ENCODE measurements at regions of chr14 and their contacts with region 1.

Region 1: DNA sequence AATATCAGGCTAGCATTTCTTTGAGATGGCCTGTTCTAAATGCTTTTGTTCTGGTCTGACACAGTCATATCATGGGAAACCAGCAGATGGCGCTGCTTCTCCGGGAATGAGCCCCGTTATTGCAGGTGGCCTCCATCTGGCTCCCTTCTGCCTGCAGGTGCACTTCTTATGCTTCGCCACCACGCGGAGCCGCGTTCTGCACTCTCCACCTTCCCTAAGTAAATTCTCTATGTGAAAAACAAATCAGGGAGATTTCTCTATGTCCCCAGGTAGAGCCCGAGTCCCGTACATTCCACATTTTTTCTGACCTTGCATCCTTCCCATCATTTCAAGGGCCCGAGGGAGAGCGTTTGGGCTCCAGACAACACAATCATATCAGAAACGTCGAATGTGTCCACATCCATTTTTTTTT is 26.2 kb downstream of the GLRX5 start:
- DNase-seq: peak; percentile 90
- H3K4me3 ChIP-seq: no peak overlapping the region
- H3K27ac ChIP-seq: no peak overlapping the region
- H3K4me1 ChIP-seq: no peaks in the 10 kb centered on the region
- H3K27me3 ChIP-seq: no peaks in the 10 kb centered on the region
- CTCF ChIP-seq: peak; percentile 97

Region 2: GRCh38 chr14:95340201-95340697 is 220.8 kb before region 1 on chr14:
- intact Hi-C with region 1: no loop called
- DNase-seq: peak; percentile 95
- H3K4me3 ChIP-seq: no peak overlapping the region
- H3K27ac ChIP-seq: peak overlapping the region; percentile 75
- H3K4me1 ChIP-seq: no peaks in the 10 kb centered on the region
- H3K27me3 ChIP-seq: no peaks in the 10 kb centered on the region
- CTCF ChIP-seq: no peak

Region 3: GRCh38 chr14:95683793-95684192 is 122.8 kb after region 1 on chr14:
- intact Hi-C with region 1: loop called (anchors 2 kb)
- DNase-seq: peak; percentile 22
- H3K4me3 ChIP-seq: no peak overlapping the region
- H3K27ac ChIP-seq: no peak overlapping the region
- H3K4me1 ChIP-seq: no peaks in the 10 kb centered on the region
- H3K27me3 ChIP-seq: no peaks in the 10 kb centered on the region
- CTCF ChIP-seq: peak; percentile 54

Region 4: DNA sequence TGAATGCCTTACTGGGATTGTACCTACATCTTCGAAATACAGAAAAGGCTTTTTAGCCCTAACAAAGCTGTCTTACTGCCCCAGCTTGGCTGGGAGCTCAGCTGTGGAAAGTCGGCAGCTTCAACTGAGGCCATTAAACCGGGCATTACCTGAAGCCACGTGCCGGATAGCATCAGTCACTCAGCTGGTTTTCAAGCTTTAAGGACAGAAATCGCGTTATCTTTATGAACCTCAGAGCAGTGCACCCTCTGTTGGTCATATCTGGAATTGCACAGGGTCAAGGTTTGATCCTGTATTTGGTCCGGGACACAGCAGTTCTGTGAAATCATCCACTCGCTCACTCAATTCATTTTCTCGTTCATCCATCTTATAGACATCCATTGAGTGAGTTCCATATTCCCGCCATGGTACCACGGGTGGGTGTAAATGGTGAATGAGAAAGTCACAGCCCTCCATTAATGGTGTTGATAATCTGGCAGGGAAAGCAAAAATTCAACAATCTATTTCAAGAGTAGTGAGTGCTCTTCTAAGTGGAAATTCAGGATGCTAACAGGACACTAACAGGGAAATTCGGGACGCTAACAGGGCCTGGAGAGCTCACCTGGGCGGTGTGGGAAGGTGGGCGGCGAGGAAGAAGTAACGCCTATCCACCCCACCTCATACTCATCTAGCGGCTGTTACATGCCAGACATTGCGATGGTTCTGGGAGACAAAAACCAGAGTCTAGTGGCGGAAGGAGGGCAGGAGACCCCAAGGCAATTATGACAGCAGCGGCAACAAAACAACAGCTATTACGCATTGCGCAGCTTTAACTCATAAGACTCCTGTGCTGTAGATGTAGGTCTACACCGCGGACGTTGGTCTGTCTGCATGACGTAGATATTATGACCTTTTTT is 213.5 kb after region 1 on chr14:
- intact Hi-C with region 1: loop called (anchors 5 kb)
- DNase-seq: peak; percentile 47
- H3K4me3 ChIP-seq: no peak overlapping the region
- H3K27ac ChIP-seq: no peak overlapping the region
- H3K4me1 ChIP-seq: no peaks in the 10 kb centered on the region
- H3K27me3 ChIP-seq: no peaks in the 10 kb centered on the region
- CTCF ChIP-seq: peak; percentile 78

Region 5: DNA sequence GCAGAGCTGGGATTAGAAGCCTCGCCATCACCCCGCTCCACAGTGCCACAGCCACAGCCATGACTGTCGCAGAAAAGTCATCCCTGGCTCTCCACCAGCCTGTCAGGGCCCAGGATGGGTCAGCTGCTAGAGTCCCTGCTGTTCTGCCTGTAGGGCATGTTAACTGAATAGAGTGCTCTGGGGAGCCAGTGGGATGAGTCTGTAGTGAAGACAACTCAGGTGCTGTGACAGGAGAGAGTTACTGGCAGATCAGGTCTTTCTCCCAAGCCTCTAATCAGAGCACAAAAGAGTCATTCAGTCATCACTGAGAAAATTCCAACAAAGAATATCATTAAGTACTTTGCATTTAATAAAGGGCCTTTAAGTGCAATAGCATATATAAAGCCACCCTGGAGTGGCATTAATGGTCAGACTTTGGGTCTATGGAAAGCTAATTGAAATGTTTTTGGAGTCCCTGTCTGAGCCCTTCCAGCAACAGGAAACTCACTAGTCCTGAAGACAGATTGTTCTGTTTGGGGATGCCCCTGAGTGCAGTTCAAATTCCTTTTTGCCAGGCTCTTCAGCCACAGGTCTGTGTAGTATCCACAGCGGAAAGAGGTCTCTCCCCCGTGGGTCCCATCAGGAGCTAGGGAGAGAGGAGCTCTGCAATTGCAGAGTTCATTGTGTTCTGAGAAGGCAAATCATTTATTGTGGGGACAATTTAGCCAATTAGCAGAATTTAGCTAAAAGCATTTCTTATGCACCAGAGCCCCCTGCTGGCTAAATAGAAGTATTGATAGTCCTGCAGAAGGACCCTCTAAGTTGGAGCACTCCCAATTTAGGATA is 433.0 kb after region 1 on chr14:
- intact Hi-C with region 1: loop called (anchors 2 kb)
- DNase-seq: peak; percentile 21
- H3K4me3 ChIP-seq: no peak overlapping the region
- H3K27ac ChIP-seq: no peak overlapping the region
- H3K4me1 ChIP-seq: no peaks in the 10 kb centered on the region
- H3K27me3 ChIP-seq: no peaks in the 10 kb centered on the region
- CTCF ChIP-seq: peak; percentile 63

Region 6: GRCh38 chr14:96275177-96276112 is 714.4 kb after region 1 on chr14:
- intact Hi-C with region 1: loop called (anchors 10 kb)
- DNase-seq: peak; percentile 80
- H3K4me3 ChIP-seq: no peak overlapping the region
- H3K27ac ChIP-seq: no peak overlapping the region
- H3K4me1 ChIP-seq: no peaks in the 10 kb centered on the region
- H3K27me3 ChIP-seq: no peaks in the 10 kb centered on the region
- CTCF ChIP-seq: peak; percentile 94